AG04449 (cell line): ENCODE measurements at regions of chr20 and their contacts with region 1.

Region 1: GRCh38 chr20:8853805-8854338 is 215.0 kb upstream of the PLCB4 start:
- DNase-seq: peak; percentile 16
- H3K4me3 ChIP-seq: no peak overlapping the region
- CTCF ChIP-seq: peak; percentile 70

Region 2: DNA sequence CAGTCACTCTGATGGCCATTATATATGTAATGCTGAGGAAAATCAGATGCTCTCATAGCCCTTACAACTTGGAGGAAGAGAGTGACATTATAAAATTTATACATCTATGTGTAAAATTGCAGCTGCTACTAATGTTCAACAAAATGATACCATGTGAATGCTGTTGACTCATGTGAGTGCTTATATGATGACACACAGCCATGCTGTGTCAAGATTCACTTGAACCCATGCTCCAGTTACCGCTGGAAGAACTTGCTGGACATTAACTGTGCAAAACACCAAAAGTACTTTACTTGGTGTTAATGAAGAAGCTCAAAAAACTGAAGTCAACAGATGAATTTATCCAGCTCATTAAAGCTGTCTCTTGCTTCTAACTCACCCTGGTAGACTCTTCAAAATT is 103.9 kb before region 1 on chr20:
- CTCF ChIA-PET with region 1: interaction called, 14 read pairs
- POLR2A ChIA-PET with region 1: no interaction called
- DNase-seq: no peak
- H3K4me3 ChIP-seq: no peak overlapping the region
- CTCF ChIP-seq: no peak

Region 3: GRCh38 chr20:8808202-8808535 is 45.7 kb before region 1 on chr20:
- CTCF ChIA-PET with region 1: interaction called, 12 read pairs
- POLR2A ChIA-PET with region 1: no interaction called
- DNase-seq: no peak
- H3K4me3 ChIP-seq: no peak overlapping the region
- CTCF ChIP-seq: no peak

Region 4: GRCh38 chr20:8842525-8842924 is 11.3 kb before region 1 on chr20:
- CTCF ChIA-PET with region 1: interaction called, 51 read pairs
- POLR2A ChIA-PET with region 1: no interaction called
- DNase-seq: no peak
- H3K4me3 ChIP-seq: no peak overlapping the region
- CTCF ChIP-seq: no peak

Region 5: DNA sequence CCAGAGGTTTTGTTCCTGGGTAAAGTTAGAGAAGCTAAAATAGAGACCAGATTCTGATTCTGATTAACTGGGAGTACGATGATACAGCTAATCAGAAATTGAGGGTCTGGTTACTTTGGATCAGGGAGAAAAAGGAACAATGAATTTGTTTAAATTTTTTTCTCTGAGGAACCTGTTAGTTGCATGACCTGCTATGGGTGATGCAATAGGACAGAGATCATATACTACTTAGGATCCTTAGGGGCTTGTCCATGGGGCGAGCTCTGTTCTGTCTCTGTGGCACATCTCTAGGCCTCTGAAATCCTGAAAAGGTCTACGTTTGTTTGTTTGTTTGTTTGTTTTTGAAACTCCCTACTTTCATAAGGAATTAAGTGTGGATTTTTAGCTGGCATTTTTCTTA is 494.4 kb after region 1 on chr20:
- CTCF ChIA-PET with region 1: interaction called, 27 read pairs
- POLR2A ChIA-PET with region 1: no interaction called
- DNase-seq: no peak
- H3K4me3 ChIP-seq: no peak overlapping the region
- CTCF ChIP-seq: no peak

Region 6: GRCh38 chr20:9359561-9360308 is 505.9 kb after region 1 on chr20:
- CTCF ChIA-PET with region 1: interaction called, 27 read pairs
- POLR2A ChIA-PET with region 1: no interaction called
- DNase-seq: no peak
- H3K4me3 ChIP-seq: no peak overlapping the region
- CTCF ChIP-seq: no peak